AG04450 (cell line): ENCODE measurements at regions of chr3 and their contacts with region 1.

Region 1: GRCh38 chr3:76177615-76178014 is 392.3 kb upstream of the ZNF717 start:
- DNase-seq: no peak
- H3K4me3 ChIP-seq: no peak overlapping the region
- H3K27ac ChIP-seq: no peak overlapping the region
- H3K27me3 ChIP-seq: no peaks in the 10 kb centered on the region
- CTCF ChIP-seq: no peak

Region 2: DNA sequence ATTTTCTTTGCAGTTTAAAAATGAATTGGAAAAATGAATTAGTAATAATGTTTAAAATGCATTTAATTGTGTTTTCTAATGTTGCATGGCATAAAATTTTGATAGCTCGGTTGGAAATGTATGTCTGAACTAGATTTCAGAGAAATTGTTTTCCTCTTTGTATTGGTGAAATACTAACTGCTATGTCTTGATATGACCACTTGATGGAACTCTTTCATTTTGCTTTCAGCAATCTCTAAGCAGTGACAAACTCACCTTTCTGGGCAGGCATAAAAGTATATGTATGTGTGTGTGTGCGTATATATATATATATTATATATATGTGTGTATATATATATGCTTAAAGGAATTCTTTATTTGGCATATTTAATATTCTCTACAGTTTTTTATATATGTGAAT is 153.0 kb before region 1 on chr3:
- CTCF ChIA-PET with region 1: no interaction called
- POLR2A ChIA-PET with region 1: no interaction called
- DNase-seq: no peak
- H3K4me3 ChIP-seq: no peak overlapping the region
- H3K27ac ChIP-seq: no peak overlapping the region
- H3K27me3 ChIP-seq: no peaks in the 10 kb centered on the region
- CTCF ChIP-seq: peak; percentile 71

Region 3: DNA sequence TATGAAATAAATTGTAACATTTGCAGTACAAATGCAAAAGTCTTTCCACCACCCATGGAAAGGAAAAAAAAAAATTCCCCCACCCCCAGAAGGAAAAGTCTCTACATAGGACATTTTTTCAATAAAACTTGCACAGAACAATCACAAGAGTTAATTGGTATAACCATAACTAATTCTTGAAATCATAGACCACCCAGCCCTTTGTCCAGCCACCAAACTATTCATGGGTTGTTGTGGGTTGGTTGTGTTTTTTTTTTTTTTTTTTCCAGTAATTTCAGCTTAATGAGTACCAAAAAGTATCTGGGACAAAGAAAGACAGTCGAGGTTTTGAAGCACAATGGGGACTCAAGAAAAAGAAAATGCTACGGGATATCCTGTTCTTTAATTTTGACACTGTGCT is 507.3 kb after region 1 on chr3:
- CTCF ChIA-PET with region 1: interaction called, 12 read pairs
- POLR2A ChIA-PET with region 1: no interaction called
- DNase-seq: no peak
- H3K4me3 ChIP-seq: no peak overlapping the region
- H3K27ac ChIP-seq: no peak overlapping the region
- H3K27me3 ChIP-seq: no peaks in the 10 kb centered on the region
- CTCF ChIP-seq: no peak